MCF 10A (cell line): ENCODE measurements at regions of chr4 and their contacts with region 1.

Region 1: DNA sequence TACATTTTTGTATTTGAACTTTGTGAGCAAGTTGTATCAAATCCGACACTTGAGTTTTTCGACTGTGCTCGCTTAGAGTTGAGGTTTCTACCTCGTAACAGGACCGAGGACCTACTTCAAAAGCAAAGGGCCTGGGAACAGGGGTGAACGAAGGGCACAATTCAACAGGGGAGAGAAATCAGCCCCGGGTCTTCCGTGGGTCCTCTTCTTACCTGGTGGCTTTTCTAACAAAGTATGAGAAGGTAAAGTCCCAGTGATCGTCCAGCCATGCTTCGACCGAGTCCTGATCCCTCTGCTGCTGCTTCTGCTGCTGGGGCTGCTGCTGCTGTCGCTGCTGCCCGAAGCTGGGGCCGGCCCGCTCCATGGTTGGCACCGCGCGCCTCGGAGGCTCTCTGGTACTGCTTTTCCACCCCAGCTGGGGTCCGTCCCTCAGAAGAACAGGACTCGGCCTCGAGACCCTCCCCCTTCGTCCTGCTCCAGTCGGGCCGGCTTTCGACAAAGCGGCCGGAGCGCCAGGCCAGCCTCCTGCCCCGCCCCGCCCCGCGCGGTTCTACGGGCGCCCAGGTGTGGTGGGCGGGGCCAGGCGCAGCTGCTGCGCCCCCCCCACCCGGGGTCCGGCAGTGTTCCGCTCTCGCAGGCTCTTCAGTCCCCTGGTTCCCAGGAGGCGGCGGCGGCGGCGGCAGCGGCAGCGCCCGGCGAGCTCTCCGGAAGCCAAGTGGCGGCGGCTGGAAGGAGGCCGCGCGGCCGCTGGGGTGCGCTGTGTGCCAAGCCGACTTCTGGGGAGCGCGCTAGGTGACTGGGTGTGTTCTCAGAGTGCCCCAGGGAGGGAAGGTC is at the start of gene PDE5A:
- DNase-seq: peak; percentile 84
- H3K4me3 Mint-ChIP-seq: peak within 1 kb of the TSS; percentile 96
- H3K27ac Mint-ChIP-seq: peak within 1 kb of the TSS; percentile 61
- H3K4me1 Mint-ChIP-seq: peaks cover 15% of the 10 kb centered on the region
- H3K27me3 Mint-ChIP-seq: no peaks in the 10 kb centered on the region
- CTCF ChIP-seq: peak; percentile 78
- total RNA-seq, gene PDE5A: 0.71 and 0.89 TPM in 2 replicates

Region 2: DNA sequence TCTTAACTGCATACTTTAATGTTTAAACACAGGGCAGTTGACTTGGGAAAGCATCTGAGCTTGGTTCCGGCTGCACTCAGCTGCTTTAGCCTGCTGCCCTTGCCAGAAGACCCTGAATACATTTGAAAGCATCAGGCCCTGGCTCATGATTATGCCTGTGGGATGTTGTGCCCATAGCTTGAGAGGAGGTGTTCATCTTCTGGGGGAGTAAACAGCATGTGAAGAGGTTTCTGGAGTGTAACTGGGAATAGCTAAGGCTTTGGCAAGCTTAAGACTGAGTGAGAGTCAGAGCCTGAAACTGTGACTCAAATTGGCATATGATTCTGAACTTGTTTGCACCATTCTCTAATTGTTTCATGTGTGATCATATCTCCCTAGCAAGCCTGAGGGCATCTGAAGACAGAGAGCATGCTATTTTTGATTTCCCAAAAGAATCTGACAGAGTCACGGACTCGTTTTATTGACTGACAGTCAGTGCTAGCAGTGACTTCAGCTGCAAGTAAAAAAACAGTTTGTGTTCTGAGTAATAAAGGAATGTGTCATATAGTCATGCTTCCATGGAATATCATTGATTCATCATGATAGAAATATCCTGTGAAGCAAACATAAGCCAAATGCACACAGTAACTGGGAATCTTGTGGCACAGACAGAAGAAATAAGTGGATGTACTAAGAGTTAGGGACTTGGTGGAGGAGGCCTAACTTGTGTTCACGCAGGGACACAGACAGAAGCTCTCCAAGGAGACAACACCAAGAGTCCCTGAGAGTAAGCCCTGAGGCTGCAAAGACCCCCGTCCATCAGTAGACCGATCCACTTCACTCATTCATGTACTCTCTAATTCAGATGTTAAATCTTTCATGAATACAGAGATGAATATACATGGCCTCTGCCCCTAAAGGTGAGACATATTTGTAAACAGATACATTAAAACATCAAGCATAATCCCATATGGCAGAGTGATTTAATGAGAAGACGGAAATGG is 639.1 kb before region 1 on chr4:
- CTCF ChIA-PET with region 1: no interaction called
- POLR2A ChIA-PET with region 1: no interaction called
- intact Hi-C with region 1: loop called (anchors 2 kb)
- DNase-seq: peak; percentile 91
- H3K4me3 Mint-ChIP-seq: peak overlapping the region; percentile 23
- H3K27ac Mint-ChIP-seq: peak overlapping the region; percentile 96
- H3K4me1 Mint-ChIP-seq: peaks cover 25% of the 10 kb centered on the region
- H3K27me3 Mint-ChIP-seq: no peaks in the 10 kb centered on the region
- CTCF ChIP-seq: no peak

Region 3: DNA sequence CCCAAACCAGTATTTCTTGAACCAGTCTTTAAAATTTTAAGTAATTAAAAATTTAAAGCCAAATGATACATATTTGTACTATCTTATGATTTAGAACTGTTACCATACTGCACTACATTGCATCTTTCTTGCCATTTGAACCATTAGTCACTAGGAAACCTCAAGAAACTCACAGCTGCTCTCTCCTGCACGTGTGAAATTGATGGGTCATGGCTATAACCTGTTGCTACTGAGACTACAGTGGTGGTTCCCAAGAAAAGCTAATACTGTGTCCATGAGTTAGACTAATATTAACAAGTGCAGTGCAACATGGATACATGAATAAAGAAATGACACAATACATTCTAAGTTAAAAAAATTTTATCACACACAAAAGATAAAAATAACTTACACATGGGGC is 88.3 kb before region 1 on chr4:
- CTCF ChIA-PET with region 1: interaction called, 13 read pairs
- POLR2A ChIA-PET with region 1: interaction called, 3 read pairs
- intact Hi-C with region 1: no loop called
- DNase-seq: no peak
- H3K4me3 Mint-ChIP-seq: no peak overlapping the region
- H3K27ac Mint-ChIP-seq: no peak overlapping the region
- H3K4me1 Mint-ChIP-seq: no peaks in the 10 kb centered on the region
- H3K27me3 Mint-ChIP-seq: no peaks in the 10 kb centered on the region
- CTCF ChIP-seq: no peak

Region 4: GRCh38 chr4:119646347-119647071 is 18.0 kb after region 1 on chr4:
- CTCF ChIA-PET with region 1: interaction called, 17 read pairs
- POLR2A ChIA-PET with region 1: no interaction called
- intact Hi-C with region 1: no loop called
- DNase-seq: no peak
- H3K4me3 Mint-ChIP-seq: no peak overlapping the region
- H3K27ac Mint-ChIP-seq: no peak overlapping the region
- H3K4me1 Mint-ChIP-seq: peaks cover 5% of the 10 kb centered on the region
- H3K27me3 Mint-ChIP-seq: no peaks in the 10 kb centered on the region
- CTCF ChIP-seq: no peak

Region 5: DNA sequence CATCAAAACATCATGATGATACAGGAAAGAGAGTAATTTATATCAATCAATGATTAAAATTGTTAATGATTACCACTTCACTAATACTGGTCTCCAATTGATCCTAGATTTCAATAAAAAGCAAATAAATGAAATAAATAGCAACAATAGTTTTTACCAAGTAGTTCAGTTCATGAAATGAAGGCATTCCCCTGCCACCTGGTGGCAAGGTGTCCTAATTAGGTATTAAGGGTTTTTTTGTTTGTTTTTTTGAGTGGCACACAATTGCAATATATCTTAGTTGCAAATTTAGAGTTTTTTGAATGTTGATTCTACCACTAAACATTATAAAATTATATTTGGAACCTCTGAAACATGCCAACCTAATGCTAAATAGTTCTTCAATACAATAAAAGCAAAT is 157.4 kb after region 1 on chr4:
- CTCF ChIA-PET with region 1: interaction called, 39 read pairs
- POLR2A ChIA-PET with region 1: interaction called, 4 read pairs
- intact Hi-C with region 1: loop called (anchors 1 kb)
- DNase-seq: peak; percentile 41
- H3K4me3 Mint-ChIP-seq: no peak overlapping the region
- H3K27ac Mint-ChIP-seq: no peak overlapping the region
- H3K4me1 Mint-ChIP-seq: no peaks in the 10 kb centered on the region
- H3K27me3 Mint-ChIP-seq: no peaks in the 10 kb centered on the region
- CTCF ChIP-seq: peak; percentile 44

Region 6: DNA sequence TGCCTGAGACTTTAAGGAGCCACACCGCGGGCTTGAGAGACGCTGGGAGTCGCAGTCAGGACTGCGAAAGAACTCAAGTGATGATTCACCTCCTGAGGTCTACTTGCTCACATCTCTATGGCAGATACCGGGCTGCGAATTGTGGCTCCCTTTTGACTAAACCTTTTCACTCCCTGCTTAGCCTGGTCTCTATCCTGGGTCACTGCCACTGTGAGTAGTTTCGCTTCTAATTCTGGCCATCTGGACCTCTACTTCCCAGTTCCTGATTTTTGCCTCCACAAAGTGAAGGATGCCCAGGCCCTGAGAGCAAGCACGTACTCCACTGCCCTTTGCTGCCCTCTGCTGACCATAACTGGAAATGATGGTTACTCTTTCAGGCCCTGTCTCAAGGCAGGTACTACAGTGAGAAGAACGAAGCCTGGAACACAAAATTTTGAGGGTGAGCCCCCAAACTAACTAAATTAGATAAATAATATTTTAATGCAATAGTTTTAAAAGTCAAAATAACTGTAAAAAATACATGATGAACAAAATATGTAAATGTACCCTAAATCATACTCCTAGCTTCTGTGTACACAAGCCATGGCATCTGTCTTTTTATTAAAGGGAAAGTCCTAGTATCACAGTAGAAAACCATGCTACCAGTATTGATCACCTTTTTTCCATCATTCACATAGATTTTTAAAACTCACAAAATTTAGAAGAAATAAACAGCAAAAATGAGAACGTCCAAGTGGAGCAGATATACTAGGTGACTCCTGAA is 421.4 kb after region 1 on chr4:
- CTCF ChIA-PET with region 1: interaction called, 121 read pairs
- POLR2A ChIA-PET with region 1: interaction called, 6 read pairs
- intact Hi-C with region 1: loop called (anchors 1 kb)
- DNase-seq: peak; percentile 84
- H3K4me3 Mint-ChIP-seq: no peak overlapping the region
- H3K27ac Mint-ChIP-seq: no peak overlapping the region
- H3K4me1 Mint-ChIP-seq: peaks cover 13% of the 10 kb centered on the region
- H3K27me3 Mint-ChIP-seq: no peaks in the 10 kb centered on the region
- CTCF ChIP-seq: peak; percentile 73